ENCODE measurements at regions of chr7 and their contacts with region 1.

Region 1: GRCh38 chr7:100586266-100587025 is at the start of gene FBXO24:
- DNase-seq: peak; percentile 99 to 100 (median 100)
- H3K4me3 ChIP-seq: peak within 1 kb of the TSS; percentile 74 to 100 (median 99)
- H3K27ac ChIP-seq: peak within 1 kb of the TSS; percentile 61 to 99 (median 95)
- H3K27me3 ChIP-seq: no peaks in the 10 kb centered on the region
- CTCF ChIP-seq: peak in 5 of 56 donors; percentile 5 to 51 (median 13)
- total RNA-seq, gene FBXO24: 0.23 to 3.2 (median 1.1) TPM in 113 of 120 experiments, not detected in the others

Region 2: GRCh38 chr7:100611974-100612729 is 25.7 kb after region 1 on chr7 and contains the start of gene MOSPD3:
- intact Hi-C with region 1: loop called (anchors 1 to 2 kb)
- DNase-seq: peak; percentile 96 to 100 (median 99)
- H3K4me3 ChIP-seq: peak within 1 kb of the TSS; percentile 64 to 96 (median 86)
- H3K27ac ChIP-seq: peak within 1 kb of the TSS in 58 of 59 donors; percentile 49 to 99 (median 94)
- H3K27me3 ChIP-seq: no peaks in the 10 kb centered on the region
- CTCF ChIP-seq: peak in 21 of 56 donors; percentile 2 to 62 (median 22)
- total RNA-seq, gene MOSPD3: 11.7 to 26.4 (median 18.7) TPM

Region 3: DNA sequence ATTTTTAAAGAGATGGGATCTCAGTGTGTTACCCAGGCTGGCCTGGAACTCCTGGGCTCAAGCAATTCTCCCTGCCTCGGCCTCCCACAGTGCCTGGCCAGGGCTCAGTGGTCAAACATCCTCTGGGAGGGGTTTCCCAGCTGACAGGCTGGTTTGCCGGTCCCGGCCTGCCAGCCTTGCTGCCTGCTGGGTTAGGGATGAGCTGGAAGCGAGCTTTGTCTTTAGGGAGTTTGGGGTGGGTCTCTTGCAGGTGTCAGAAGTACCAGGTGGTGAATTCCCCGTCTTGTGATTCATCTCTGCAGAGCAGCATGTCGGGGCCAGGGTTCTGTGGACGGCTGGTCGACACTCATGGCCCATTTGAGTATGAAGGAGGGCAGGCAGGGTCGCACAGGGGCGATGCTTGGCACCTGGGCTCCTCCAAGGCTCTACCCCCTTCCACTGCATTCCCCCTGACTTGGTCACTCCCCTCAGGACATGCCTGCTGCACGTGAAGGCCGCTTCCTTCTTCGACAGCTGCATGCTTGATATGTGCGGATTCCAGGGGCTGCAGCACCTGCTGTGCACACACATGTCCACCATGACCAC is 177.2 kb after region 1 on chr7:
- intact Hi-C with region 1: no loop called
- DNase-seq: no peak
- H3K4me3 ChIP-seq: no peak overlapping the region
- H3K27ac ChIP-seq: no peak overlapping the region
- H3K27me3 ChIP-seq: peaks cover 0 to 3% (median 0%) of the 10 kb centered on the region in 45 donors
- CTCF ChIP-seq: no peak